Activated CD4-positive, alpha-beta memory T cell treated with anti-CD3 and anti-CD28 coated beads for 36 hours (primary cell): ENCODE measurements at regions of chr19 and their contacts with region 1.

Region 1: DNA sequence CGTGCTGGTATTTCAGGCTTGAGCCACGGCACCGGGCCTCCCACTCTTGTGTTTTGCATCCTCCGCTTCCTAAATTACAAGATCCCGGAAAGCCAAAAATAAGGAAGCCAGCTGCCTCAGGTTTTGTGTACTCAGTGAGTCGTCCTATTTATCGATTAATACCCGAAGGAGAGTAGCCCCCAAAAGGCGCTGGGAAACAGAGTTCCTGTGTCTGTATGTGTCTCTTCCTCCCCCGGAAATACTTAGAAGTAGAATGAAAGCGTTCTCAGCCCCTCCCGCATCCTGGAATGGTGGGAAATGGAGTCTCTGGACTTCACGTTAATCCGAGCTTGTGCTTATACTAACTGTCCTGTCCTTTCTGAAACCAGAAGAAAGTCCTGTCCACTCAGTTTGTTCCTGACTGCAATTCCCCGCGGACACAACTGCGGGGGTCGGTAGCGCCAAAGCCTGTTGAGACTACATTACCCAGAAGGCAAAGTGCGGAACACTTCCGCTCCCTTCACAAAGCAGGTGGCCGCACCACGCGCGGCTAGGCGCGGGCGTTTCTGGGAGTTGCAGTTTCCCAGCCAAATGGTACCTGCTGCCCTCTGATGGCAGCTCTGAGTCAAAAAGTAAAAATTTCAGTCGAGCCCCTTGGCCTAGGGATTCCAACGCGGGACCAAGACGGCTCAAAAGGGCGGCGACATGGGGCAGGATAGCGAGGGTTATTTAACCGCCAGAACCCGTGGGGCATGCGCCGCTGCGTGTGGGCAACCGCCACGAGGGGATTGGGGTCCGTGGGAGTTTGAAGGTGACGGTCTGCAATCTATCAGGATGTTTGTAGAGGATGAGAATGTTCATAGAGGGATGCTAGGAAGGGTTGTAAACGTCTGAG is 2.2 kb upstream of the GSK3A start:
- DNase-seq: peak; percentile 96
- H3K4me3 Mint-ChIP-seq: peak overlapping the region; percentile 92
- H3K27ac Mint-ChIP-seq: peak overlapping the region; percentile 94
- H3K4me1 Mint-ChIP-seq: peaks cover 42% of the 10 kb centered on the region
- H3K27me3 Mint-ChIP-seq: no peaks in the 10 kb centered on the region

Region 2: DNA sequence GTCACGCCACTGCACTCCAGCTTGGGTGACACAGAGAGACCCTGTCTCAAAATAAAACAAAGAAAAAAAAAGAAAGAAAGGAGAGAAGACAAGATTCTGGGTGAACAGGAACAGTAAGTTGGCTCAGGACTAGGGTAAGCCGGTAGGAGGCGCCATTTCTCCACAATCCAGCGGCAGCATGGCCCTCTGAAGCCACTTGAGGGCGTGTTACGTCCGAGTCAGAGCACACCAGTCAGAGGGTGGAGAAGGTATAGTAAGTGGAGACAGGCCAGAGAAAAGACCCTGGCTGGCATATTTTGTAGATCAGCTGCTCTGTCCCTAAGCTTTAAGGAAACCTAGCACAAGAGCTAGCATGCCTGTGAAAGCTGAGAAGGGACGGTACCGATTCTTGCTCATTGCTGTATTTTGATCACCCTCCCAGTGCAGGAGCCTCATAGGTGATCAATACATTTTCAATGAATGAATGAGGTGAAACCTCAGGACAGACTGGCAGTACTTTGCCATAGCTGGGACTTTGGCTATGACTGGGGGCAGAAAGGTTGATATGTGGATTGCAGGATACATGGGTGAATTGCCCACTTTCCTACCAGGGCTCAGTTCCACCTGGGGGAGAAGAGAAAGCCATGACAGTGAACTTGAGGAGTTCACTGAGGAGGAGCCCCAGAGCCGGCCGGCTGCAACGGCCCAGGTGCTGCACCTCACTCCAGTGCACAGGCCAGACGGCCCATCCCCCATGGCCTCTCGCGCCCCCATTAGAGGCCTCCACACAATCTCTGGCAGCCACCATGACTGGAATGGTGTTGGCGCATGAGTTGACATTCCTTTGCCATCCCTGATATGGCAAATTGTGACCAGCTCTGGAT is 135.8 kb before region 1 on chr19:
- CTCF ChIA-PET with region 1: interaction called, 13 read pairs
- POLR2A ChIA-PET with region 1: no interaction called
- intact Hi-C with region 1: loop called (anchors 2 kb)
- DNase-seq: peak; percentile 94
- H3K4me3 Mint-ChIP-seq: no peak overlapping the region
- H3K27ac Mint-ChIP-seq: no peak overlapping the region
- H3K4me1 Mint-ChIP-seq: peaks cover 55% of the 10 kb centered on the region
- H3K27me3 Mint-ChIP-seq: no peaks in the 10 kb centered on the region

Region 3: DNA sequence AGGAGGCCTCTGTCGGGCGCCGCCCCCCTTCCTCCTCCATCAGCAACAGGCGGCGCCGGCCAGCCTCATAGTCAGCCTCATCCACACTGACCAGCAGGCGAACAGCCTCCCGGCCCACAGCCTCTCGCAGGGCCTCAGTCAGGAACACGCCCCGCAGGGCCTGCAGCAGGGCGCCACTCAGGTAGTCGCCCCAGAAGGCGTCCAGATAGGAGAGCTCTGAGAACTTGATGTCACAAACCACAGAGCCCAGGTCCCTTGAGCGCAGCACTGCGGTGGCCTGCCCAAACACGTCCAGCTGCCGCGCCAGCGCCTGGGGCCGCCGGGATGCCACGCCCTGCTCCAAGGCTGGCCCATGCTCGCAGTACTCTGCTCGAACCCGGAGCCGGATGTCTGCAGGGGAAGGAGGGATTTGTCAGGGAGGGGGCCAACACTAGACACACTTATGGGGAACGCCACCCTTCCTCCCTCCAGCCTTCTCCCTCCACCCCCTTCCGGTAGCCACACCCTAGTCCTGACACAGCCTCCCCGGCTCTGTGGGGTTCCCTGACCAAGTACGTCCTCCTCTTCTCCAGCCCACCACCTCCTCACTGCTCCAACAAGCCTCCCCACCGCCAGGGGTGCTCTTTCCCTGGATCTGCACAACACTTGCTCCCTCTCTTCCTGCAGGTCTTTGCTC is 45.0 kb before region 1 on chr19:
- CTCF ChIA-PET with region 1: interaction called, 3 read pairs
- POLR2A ChIA-PET with region 1: no interaction called
- intact Hi-C with region 1: loop called (anchors 1 kb)
- DNase-seq: peak; percentile 86
- H3K4me3 Mint-ChIP-seq: peak overlapping the region; percentile 65
- H3K27ac Mint-ChIP-seq: peak overlapping the region; percentile 98
- H3K4me1 Mint-ChIP-seq: peaks cover 80% of the 10 kb centered on the region
- H3K27me3 Mint-ChIP-seq: no peaks in the 10 kb centered on the region

Region 4: DNA sequence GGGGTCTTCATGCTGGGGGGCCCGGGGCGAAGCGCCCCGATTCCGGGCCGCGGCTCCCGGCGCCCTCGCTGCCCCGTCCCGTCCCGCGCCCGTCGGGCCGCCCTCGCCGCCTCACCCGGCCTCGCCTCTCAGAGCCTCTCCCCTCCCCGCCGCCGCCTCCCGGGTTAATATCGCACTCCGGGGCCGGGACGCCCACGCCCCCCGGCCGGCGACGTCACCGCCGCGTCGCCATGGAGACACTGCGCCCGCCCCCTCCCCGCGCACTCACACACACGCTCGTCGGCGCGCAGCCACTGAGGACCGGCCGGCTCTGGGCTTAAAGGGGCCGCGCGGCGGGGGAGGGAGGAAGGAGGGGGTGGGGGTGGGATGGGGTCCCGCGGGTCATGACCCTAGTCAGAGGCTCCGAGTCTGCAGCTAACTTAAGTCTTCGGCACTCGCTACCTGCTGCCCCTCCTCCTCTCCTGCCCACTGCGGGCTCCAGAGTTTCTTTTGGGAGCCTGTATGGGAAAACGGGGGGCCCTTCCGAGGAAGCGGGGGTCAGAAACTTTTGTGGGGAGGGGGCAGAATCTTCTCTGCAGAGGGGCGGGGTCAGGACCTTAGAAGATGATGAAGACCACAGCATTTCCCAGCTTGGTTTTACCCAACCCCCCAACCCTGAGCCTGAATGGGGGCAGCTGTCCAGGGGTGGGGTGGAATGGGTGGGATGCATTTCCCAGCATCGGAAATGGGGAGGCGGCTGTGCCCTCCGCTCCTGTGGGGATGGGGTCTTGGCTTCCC is 10.6 kb after region 1 on chr19 and contains the start of gene ERF:
- CTCF ChIA-PET with region 1: interaction called, 3 read pairs
- POLR2A ChIA-PET with region 1: interaction called, 8 read pairs
- intact Hi-C with region 1: loop called (anchors 1 kb)
- DNase-seq: peak; percentile 95
- H3K4me3 Mint-ChIP-seq: peak within 1 kb of the TSS; percentile 80
- H3K27ac Mint-ChIP-seq: peak within 1 kb of the TSS; percentile 79
- H3K4me1 Mint-ChIP-seq: peaks cover 30% of the 10 kb centered on the region
- H3K27me3 Mint-ChIP-seq: no peaks in the 10 kb centered on the region
- total RNA-seq, gene ERF: 43.1 to 56.5 TPM

Region 5: GRCh38 chr19:42283143-42284065 is 38.8 kb after region 1 on chr19:
- CTCF ChIA-PET with region 1: interaction called, 107 read pairs
- POLR2A ChIA-PET with region 1: interaction called, 10 read pairs
- intact Hi-C with region 1: loop called (anchors 1 kb)
- DNase-seq: peak; percentile 97
- H3K4me3 Mint-ChIP-seq: no peak overlapping the region
- H3K27ac Mint-ChIP-seq: no peak overlapping the region
- H3K4me1 Mint-ChIP-seq: peaks cover 44% of the 10 kb centered on the region
- H3K27me3 Mint-ChIP-seq: no peaks in the 10 kb centered on the region